ENCODE measurements at regions of chr10 and their contacts with region 1.

Region 1: DNA sequence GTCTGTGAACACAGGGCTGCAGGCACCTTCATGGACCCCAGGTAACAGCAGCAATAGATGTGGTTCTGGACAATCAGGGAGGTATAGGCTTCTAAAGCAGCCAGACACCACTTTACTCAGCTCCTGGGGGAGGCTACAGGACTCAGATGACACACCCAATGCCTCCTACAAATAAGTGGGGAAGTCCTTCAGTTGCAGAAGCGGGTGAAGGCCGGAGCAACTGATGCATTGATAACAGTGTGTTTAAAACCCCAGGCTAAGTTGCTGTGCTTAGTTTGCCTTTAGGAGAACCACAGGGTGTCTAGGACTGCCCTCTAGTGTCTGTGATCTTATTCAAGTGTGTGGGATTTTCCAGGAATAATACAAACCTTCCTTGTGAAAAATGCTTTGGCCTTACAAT is 5.9 kb upstream of the ITGA8 start:
- DNase-seq: no peak
- H3K4me3 ChIP-seq: no peak overlapping the region
- H3K27ac ChIP-seq: peak overlapping the region; percentile 3
- H3K4me1 ChIP-seq: peaks cover 7% of the 10 kb centered on the region
- H3K27me3 ChIP-seq: no peaks in the 10 kb centered on the region
- CTCF ChIP-seq: peak in 2 of 3 experiments; percentile 41 to 53
- POLR2A ChIP-seq: no peak

Region 2: DNA sequence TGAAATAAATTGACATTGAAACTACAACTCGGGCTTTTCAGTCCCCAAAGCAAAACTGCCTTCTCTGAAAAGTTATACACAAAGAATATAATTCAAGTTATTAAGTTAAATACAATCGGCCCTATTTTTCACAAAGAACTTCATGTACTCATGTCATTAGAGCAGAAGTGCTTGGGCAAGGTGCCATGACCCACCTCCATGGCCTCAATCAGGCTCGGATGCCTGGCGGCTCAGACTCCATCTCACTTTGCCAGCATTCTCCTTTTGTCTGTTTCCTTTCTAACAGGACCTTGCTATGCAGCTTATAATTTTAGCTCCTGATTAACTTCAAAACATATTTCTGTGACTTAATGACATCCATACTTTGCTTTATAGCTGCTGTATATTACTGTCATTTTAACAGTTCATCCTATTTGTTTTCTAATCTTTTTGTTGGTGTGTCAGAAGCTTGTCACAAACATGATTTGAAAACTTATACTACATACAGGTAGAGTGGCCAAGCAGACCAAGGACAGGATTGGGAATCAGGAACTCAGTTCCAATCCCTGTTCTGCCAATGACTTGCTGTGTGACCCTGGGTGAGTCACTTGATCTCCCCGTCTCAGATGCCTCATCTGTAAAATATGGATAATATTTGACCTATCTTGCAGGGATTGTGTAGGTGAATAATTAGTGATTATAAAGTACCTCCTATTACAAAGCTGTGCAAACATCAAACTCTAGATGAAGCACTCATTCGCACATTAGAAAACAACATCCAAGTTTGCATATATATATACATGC is 54.9 kb after region 1 on chr10:
- intact Hi-C with region 1: no loop called
- DNase-seq: no peak
- H3K4me3 ChIP-seq: no peak overlapping the region
- H3K27ac ChIP-seq: no peak overlapping the region
- H3K4me1 ChIP-seq: no peaks in the 10 kb centered on the region
- H3K27me3 ChIP-seq: no peaks in the 10 kb centered on the region
- CTCF ChIP-seq: no peak
- POLR2A ChIP-seq: no peak

Region 3: DNA sequence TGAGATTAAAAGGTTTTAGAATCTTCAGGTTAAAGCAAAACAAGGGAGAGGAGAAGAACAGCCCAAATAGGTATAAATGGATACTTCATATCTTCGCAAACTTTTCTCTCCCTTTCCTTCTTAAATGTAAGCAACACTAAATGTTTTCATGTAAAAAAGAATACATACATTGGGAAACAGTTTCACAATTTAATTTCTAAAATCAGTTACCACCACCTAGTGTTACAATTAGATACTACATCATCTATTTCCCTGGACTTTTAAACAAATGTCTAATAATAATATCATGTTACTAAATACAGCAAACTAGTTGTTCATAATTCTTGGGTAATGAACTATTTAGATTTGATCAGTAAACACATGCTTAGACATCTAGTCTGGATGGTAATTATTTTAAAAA is 98.9 kb after region 1 on chr10:
- intact Hi-C with region 1: loop called (anchors 10 kb)
- DNase-seq: no peak
- H3K4me3 ChIP-seq: no peak overlapping the region
- H3K27ac ChIP-seq: no peak overlapping the region
- H3K4me1 ChIP-seq: no peaks in the 10 kb centered on the region
- H3K27me3 ChIP-seq: no peaks in the 10 kb centered on the region
- CTCF ChIP-seq: peak; percentile 27 to 38 (median 33)
- POLR2A ChIP-seq: no peak